Right cardiac atrium (tissue), 5 donors: ENCODE measurements at regions of chr14 and their contacts with region 1.

Region 1: GRCh38 chr14:50003213-50004031 is 110.5 kb downstream of the ARF6 start:
- DNase-seq: peak; percentile 90 to 96 (median 94)
- ATAC-seq: peak; percentile 85
- H3K4me3 ChIP-seq: peak overlapping the region; percentile 45
- H3K27ac ChIP-seq: peak overlapping the region; percentile 56
- H3K4me1 ChIP-seq: peaks cover 5% of the 10 kb centered on the region
- H3K27me3 ChIP-seq: no peaks in the 10 kb centered on the region

Region 2: GRCh38 chr14:49867831-49868723 is 135.3 kb before region 1 on chr14:
- intact Hi-C with region 1: loop called in 2 of 4 experiments (anchors 10 kb)
- DNase-seq: peak; percentile 97 to 99 (median 98)
- ATAC-seq: peak; percentile 97 to 98
- H3K4me3 ChIP-seq: peak overlapping the region; percentile 75
- H3K27ac ChIP-seq: peak overlapping the region; percentile 95
- H3K4me1 ChIP-seq: peaks cover 2% of the 10 kb centered on the region
- H3K27me3 ChIP-seq: no peaks in the 10 kb centered on the region

Region 3: GRCh38 chr14:49892636-49893308 is 110.7 kb before region 1 on chr14 and contains the start of gene ARF6:
- intact Hi-C with region 1: loop called in 1 of 4 experiments (anchors 5 kb)
- DNase-seq: peak; percentile 99 to 100 (median 100)
- ATAC-seq: peak; percentile 98 to 99
- H3K4me3 ChIP-seq: peak within 1 kb of the TSS; percentile 95
- H3K27ac ChIP-seq: peak within 1 kb of the TSS; percentile 98
- H3K4me1 ChIP-seq: peaks cover 2% of the 10 kb centered on the region
- H3K27me3 ChIP-seq: no peaks in the 10 kb centered on the region
- total RNA-seq, gene ARF6: 25.3 to 34.6 (median 28.2) TPM

Region 4: GRCh38 chr14:49950275-49951228 is 52.9 kb before region 1 on chr14:
- intact Hi-C with region 1: no loop called
- DNase-seq: no peak
- ATAC-seq: peak in 1 of 2 donors; percentile 31
- H3K4me3 ChIP-seq: no peak overlapping the region
- H3K27ac ChIP-seq: no peak overlapping the region
- H3K4me1 ChIP-seq: peaks cover 8% of the 10 kb centered on the region
- H3K27me3 ChIP-seq: no peaks in the 10 kb centered on the region

Region 5: DNA sequence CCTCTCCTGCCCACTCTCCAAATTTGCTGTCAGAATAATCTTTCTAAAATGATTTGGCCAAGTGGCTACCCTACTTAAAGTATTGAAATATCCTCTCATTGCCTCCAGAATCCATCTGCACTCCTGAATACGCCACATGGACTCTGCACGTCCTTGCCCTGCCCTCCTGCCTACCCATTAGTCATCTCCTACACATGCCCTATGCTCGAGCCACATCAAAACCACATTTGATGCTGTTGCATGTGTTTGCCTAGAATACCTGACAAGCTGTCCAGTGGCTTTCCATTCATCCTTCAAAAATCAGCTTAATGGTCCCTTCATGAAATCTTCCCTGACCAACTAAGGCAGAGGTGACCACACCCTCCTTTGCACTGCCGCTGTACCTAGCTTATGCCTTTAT is 95.9 kb after region 1 on chr14:
- intact Hi-C with region 1: loop called in 1 of 4 experiments (anchors 10 kb)
- DNase-seq: no peak
- ATAC-seq: no peak
- H3K4me3 ChIP-seq: no peak overlapping the region
- H3K27ac ChIP-seq: no peak overlapping the region
- H3K4me1 ChIP-seq: peaks cover 1% of the 10 kb centered on the region
- H3K27me3 ChIP-seq: no peaks in the 10 kb centered on the region